ENCODE measurements at regions of chr5 and their contacts with region 1.

Region 1: DNA sequence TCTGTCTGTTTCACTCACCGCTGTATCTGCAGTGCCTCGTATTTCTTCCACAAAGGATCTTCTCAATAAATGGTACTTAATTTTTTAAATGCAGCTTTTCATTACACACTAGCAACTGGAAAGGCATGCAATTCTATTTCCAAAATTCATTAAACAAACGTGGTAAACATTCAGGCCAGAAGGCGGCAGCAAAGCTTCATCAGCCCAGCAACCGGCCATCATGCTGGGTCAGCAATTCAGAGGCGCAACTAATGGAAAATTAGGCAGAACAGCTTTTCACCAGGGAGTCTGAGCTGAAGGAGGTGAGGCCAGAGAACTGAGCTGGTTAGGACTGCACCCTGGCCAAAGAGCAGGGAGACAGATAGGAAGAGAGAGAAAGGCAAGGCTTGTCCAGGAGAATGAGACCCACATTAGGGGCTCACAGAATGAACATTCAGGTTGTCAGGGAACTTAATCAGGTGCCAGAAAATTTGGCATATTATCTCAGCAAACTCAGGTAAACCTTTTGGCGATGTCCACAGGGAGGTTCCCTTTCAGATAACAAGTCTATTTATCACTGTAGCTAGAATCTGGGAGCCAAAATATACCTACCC is 17.7 kb upstream of the RNF180 start:
- DNase-seq: peak; percentile 27 to 51 (median 43)
- H3K4me3 ChIP-seq: no peak overlapping the region
- H3K27ac ChIP-seq: no peak overlapping the region
- H3K4me1 ChIP-seq: no peaks in the 10 kb centered on the region
- H3K27me3 ChIP-seq: peaks cover 0 to 8% (median 0%) of the 10 kb centered on the region in 5 experiments

Region 2: GRCh38 chr5:64207978-64208377 is 60.0 kb after region 1 on chr5:
- CTCF ChIA-PET with region 1: interaction called, 15 read pairs
- POLR2A ChIA-PET with region 1: no interaction called
- DNase-seq: peak; percentile 13 to 51 (median 31)
- H3K4me3 ChIP-seq: no peak overlapping the region
- H3K27ac ChIP-seq: no peak overlapping the region
- H3K4me1 ChIP-seq: no peaks in the 10 kb centered on the region
- H3K27me3 ChIP-seq: peaks cover 0 to 4% (median 0%) of the 10 kb centered on the region in 5 experiments